WTC11 (cell line): ENCODE measurements at regions of chr5 and their contacts with region 1.

Region 1: DNA sequence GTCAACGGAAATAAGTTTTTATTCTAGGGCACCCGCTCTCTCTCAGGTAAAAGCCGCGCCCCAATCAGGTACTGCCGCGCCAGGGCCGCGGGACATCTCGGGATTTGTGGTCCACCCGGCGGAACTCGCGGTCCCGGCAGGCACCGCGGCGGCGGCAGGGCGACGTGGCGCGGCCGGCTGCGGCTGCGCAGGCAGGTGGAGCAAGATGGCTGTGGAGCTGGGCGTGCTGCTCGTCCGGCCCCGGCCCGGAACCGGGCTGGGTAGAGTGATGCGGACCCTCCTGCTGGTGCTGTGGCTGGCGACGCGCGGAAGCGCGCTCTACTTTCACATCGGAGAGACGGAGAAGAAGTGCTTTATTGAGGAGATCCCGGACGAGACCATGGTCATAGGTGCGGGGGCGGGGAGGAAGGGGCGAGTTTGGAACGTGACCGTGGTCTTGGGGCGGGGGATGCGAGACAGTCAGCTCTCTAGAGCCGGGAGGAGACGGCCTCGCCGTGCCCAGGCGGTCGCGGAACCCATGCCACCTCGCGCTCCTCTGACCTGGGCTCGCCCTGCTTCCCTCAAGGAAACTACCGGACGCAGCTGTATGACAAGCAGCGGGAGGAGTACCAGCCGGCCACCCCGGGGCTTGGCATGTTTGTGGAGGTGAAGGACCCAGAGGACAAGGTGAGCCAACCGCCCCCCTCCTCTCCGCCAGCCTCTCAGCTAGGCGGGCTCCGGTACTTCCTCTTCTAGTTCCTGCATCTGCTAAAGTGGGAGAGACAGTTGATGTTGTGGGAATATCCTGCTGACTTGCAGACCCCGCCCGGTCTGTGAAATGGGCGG is at the start of gene TMED9:
- DNase-seq: peak; percentile 90
- ATAC-seq: peak; percentile 97
- H3K4me3 Mint-ChIP-seq: peak within 1 kb of the TSS; percentile 100
- H3K27ac Mint-ChIP-seq: peak within 1 kb of the TSS; percentile 99
- H3K4me1 Mint-ChIP-seq: peaks cover 6% of the 10 kb centered on the region
- H3K27me3 Mint-ChIP-seq: peaks cover 30% of the 10 kb centered on the region
- CTCF ChIP-seq: no peak
- total RNA-seq, gene TMED9: 164 to 172 TPM (median 170 TPM) in 3 replicates

Region 2: DNA sequence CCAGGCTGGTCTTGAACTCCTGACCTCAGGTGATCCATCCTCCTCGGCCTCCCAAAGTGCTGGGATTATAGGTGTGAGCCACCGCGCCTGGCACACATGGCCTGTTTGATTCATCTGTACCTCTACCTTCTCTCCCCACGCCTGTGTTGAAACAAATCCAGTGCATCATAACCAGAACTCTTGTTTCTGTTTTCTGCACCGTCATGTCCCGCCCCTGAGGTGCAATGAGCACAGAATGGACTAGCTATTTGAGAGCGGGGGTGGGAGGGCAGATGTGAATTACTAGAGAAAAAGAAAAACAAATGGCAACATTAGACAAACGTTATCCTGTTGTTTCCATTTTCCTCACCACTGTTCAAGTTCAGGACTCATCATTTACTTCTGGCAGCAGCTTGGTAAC is 27.2 kb before region 1 on chr5:
- CTCF ChIA-PET with region 1: no interaction called
- POLR2A ChIA-PET with region 1: no interaction called
- DNase-seq: no peak
- ATAC-seq: no peak
- H3K4me3 Mint-ChIP-seq: no peak overlapping the region
- H3K27ac Mint-ChIP-seq: no peak overlapping the region
- H3K4me1 Mint-ChIP-seq: peaks cover 2% of the 10 kb centered on the region; the same call in 1 of the 2 replicates
- H3K27me3 Mint-ChIP-seq: peaks cover 43% of the 10 kb centered on the region
- CTCF ChIP-seq: no peak

Region 3: GRCh38 chr5:177576169-177576568 is 16.1 kb before region 1 on chr5:
- CTCF ChIA-PET with region 1: interaction called, 11 read pairs
- POLR2A ChIA-PET with region 1: no interaction called
- DNase-seq: no peak
- ATAC-seq: no peak
- H3K4me3 Mint-ChIP-seq: no peak overlapping the region
- H3K27ac Mint-ChIP-seq: no peak overlapping the region
- H3K4me1 Mint-ChIP-seq: peaks cover 10% of the 10 kb centered on the region
- H3K27me3 Mint-ChIP-seq: peaks cover 20% of the 10 kb centered on the region; the same call in 1 of the 2 replicates
- CTCF ChIP-seq: no peak

Region 4: DNA sequence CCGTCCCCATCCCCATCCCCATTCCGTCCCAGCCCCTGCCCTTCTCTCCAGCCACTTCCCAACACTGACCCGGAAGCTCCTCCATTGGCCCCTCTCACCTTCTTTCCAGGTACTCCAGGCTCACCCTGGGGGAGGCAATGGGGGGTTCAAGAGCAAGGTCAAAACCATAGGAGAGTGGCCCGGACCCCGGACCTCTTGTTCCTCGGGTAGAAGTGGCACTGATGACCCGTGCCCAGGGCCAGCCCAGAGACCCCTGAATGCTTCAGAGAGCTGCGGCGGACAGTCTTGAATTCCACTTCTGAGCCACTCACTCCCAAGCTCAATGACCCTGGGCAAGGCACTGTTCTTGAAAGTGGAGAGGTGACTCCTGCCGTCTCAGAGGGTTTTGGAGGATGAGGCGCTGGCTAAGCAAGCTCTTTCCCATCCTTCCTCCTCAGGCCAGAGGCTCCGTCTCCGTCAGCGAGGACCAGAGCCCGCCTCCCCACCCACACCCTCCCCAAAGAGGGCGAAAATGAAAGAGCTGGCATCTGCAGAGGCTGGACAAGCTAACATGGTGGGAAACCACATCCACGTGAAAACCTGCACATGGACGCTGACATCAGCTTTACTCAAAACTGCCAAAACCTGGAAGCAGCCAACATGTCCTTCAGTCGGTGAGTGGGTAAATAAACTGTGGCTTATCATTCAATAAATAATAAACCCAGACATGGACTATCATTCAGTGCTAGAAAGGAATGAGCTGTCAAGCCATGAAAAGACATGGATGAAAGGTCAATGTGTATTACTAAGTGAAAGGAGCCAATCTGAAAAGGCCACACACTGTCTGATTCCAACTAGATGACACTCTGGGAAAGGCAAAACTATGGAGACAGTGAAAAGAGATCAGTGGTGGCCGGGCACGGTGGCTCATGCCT is 667.7 kb after region 1 on chr5:
- CTCF ChIA-PET with region 1: no interaction called
- POLR2A ChIA-PET with region 1: no interaction called
- DNase-seq: no peak
- ATAC-seq: no peak
- H3K4me3 Mint-ChIP-seq: no peak overlapping the region
- H3K27ac Mint-ChIP-seq: no peak overlapping the region
- H3K4me1 Mint-ChIP-seq: no peaks in the 10 kb centered on the region
- H3K27me3 Mint-ChIP-seq: peaks cover 5% of the 10 kb centered on the region; the same call in 1 of the 2 replicates
- CTCF ChIP-seq: no peak